ENCODE measurements at regions of chr6 and their contacts with region 1.

Region 1: DNA sequence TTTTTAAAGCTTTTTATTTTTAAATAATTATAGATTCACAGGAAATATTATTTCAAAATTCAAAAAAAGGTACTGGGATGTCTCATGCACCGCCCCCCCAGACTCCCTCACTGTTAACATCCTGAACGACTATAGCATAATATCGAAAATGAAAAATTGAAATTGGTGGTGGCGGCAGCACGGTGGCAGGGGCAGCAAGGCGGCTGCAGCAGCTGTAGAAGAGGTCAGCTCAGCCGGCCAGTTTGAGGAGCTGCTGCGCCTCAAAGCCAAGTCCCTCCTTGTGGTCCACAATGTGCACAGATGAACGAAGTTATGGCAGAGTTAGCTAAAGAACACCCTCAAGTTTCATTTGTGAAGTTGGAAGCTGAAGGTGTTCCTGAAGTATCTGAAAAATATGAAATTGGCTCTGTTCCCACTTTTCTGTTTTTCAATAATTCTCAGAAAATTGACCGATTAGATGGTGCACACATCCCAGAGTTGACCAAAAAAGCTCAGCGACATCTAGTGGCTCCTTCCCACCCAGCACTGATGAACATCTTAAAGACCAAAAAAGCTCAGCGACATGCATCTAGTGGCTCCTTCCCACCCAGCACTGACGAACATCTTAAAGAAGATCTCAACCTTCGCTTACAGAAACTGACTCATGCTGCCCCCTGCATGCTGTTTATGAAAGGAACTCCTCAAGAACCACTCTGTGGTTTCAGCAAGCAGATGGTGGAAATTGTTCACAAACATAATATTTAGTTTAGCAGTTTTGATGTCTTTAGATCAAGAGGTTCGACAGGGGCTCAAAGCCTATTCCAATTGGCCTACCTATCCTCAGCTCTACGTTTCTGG is 100.8 kb downstream of the FAM217A start:
- DNase-seq: peak; percentile 62
- H3K4me3 Mint-ChIP-seq: no peak overlapping the region
- H3K27ac Mint-ChIP-seq: no peak overlapping the region
- H3K4me1 Mint-ChIP-seq: peaks cover 7% of the 10 kb centered on the region
- H3K27me3 Mint-ChIP-seq: peaks cover 1% of the 10 kb centered on the region

Region 2: DNA sequence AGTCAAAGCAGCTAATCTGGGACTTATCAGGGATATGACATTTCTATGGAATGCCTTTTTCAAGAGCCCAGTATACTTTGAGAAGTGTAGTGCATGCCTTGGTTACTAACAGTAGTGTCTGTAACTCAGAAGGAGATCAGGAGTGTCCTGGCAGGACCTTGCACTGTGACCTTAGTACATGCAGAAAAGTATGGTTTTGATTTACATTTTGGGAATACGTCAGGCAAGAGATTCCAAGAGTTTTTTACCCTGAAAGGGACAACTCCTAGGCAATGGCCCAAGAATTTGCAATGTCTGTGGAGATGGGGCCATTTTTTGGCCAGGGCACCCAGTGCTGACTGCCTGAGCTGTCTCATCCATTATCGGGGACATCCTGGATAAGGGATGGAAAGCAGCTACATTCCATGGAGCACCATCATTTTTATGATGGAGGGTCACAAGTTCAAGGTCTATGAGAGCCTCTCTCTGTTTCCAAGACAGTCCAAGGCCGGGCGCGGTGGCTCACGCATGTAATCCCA is 48.8 kb before region 1 on chr6:
- CTCF ChIA-PET with region 1: interaction called, 16 read pairs
- POLR2A ChIA-PET with region 1: no interaction called
- intact Hi-C with region 1: no loop called
- DNase-seq: no peak
- H3K4me3 Mint-ChIP-seq: no peak overlapping the region
- H3K27ac Mint-ChIP-seq: no peak overlapping the region
- H3K4me1 Mint-ChIP-seq: no peaks in the 10 kb centered on the region
- H3K27me3 Mint-ChIP-seq: no peaks in the 10 kb centered on the region

Region 3: DNA sequence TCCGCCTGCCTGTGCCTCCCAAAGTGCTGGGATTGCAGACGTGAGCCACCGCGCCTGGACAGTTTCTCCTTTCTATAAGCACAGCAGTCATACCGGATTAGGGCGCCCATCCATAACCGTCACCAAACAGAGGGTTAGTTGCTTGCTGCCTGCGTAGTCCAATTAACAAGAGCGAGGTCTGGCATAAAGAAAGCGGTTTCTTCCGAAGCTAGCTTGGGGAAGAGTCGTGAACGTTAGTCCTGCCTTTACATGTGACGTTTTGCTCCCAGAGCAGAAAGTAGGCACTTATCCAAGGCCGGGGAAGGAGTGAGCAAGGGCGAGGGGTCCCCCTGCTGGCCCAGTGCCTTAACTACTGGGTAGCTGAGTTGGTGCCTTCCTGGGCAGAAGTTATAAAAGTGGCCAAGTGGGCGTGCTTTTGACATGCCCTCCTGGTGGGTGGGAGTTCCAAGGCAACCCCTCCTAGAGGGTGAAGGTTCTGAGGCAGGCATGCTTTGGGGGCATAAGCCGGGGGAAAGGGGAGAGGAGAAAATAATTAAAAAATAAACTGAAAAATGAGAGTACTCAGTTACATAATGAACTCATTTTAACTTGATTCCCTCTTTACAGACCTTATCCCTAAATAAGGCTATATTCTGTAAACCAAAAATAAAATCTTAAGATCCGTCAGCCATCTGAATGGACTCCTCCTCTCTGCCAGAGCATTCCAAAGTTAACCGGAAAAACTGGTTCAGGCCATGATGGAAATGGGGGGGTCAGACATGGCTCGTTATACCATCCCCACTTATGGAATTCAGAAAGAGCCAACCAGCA is 12.8 kb after region 1 on chr6:
- CTCF ChIA-PET with region 1: interaction called, 53 read pairs
- POLR2A ChIA-PET with region 1: no interaction called
- intact Hi-C with region 1: no loop called
- DNase-seq: peak; percentile 81
- H3K4me3 Mint-ChIP-seq: no peak overlapping the region
- H3K27ac Mint-ChIP-seq: no peak overlapping the region
- H3K4me1 Mint-ChIP-seq: peaks cover 8% of the 10 kb centered on the region
- H3K27me3 Mint-ChIP-seq: no peaks in the 10 kb centered on the region

Region 4: GRCh38 chr6:3997177-3997770 is 19.2 kb after region 1 on chr6:
- CTCF ChIA-PET with region 1: interaction called, 28 read pairs
- POLR2A ChIA-PET with region 1: no interaction called
- intact Hi-C with region 1: no loop called
- DNase-seq: no peak
- H3K4me3 Mint-ChIP-seq: no peak overlapping the region
- H3K27ac Mint-ChIP-seq: no peak overlapping the region
- H3K4me1 Mint-ChIP-seq: peaks cover 9% of the 10 kb centered on the region
- H3K27me3 Mint-ChIP-seq: no peaks in the 10 kb centered on the region